Breast epithelium (tissue), 4 donors: ENCODE measurements at regions of chr12 and their contacts with region 1.

Region 1: DNA sequence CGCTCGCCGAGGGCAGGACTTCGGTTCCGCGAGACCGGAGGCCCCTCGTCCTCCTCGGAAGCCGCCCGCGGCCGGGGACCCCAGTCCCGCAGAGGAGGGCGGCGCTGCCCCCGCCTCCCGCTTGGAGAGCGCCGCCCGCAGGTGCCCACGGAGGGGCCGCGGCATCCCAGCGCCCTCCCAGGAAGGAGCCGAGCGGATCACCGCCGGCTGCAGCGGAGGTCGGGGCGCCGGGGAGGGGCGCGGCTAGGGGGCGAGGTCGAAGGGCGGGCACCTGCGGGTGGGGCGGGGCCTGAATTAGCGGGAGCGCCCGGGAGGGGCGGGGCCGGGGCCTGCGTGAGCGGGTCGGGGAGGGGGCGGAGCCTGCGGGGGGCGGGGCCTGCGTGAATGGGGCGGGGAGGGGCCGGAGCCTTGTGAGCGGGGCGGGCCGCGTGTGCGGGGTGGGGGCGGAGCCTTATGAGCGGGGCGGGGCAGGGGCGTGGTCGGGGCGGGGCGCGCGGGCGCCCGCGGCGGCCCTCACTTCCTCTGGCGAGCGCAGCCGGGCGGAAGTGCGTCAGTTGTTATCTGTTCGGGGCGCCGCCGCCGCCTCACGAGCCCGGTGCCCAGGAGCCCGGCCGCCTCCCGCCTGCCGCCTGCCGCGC is at the start of gene FBRSL1:
- DNase-seq: peak; percentile 84 to 89
- H3K4me3 ChIP-seq: peak within 1 kb of the TSS; percentile 74 to 94 (median 81)
- H3K27ac ChIP-seq: peak within 1 kb of the TSS; percentile 61 to 74
- H3K4me1 ChIP-seq: peaks cover 28 to 33% of the 10 kb centered on the region in 2 donors
- H3K27me3 ChIP-seq: no peaks in the 10 kb centered on the region
- CTCF ChIP-seq: no peak
- POLR2A ChIP-seq: no peak
- total RNA-seq, gene FBRSL1: 3.5 to 9.8 (median 7.2) TPM

Region 2: GRCh38 chr12:132144115-132144812 is 345.5 kb before region 1 on chr12 and contains the starts of genes DDX51 and NOC4L:
- intact Hi-C with region 1: loop called (anchors 10 kb)
- DNase-seq: peak; percentile 93 to 94
- H3K4me3 ChIP-seq: peak within 1 kb of the TSS; percentile 96 to 100 (median 99)
- H3K27ac ChIP-seq: peak within 1 kb of the TSS; percentile 93 to 95
- H3K4me1 ChIP-seq: peaks cover 9 to 18% of the 10 kb centered on the region in 2 donors
- H3K27me3 ChIP-seq: no peaks in the 10 kb centered on the region
- CTCF ChIP-seq: no peak
- POLR2A ChIP-seq: no peak
- total RNA-seq, gene DDX51: 11.2 to 16.7 (median 16.4) TPM
- total RNA-seq, gene NOC4L: 10.1 to 14.3 (median 11.1) TPM